Mammary epithelial cell (primary cell): ENCODE measurements at regions of chr3 and their contacts with region 1.

Region 1: DNA sequence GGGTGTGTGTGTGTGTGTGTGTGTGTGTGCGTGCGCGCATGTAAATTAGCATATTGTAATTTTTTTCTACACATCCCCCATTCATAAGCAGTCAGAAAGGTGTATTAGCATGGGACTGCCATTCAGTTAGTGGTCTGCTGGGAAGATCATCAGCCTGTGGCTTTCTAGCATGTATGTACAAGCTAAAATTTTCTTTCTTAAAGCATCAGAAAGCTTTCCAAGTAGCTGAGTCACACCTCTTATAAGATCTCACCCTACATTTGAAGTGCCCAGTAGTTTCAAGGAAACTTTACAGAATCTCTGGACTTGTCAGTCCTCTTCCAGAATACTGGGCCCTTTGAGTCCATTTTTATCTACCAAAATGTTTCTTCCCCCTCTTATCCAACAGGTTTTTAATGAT is 411.4 kb upstream of the TPRG1 start:
- DNase-seq: peak; percentile 91
- H3K4me3 ChIP-seq: no peak overlapping the region
- H3K27ac ChIP-seq: peak overlapping the region; percentile 67
- H3K4me1 ChIP-seq: peaks cover 22% of the 10 kb centered on the region
- H3K27me3 ChIP-seq: no peaks in the 10 kb centered on the region
- CTCF ChIP-seq: no peak

Region 2: GRCh38 chr3:188244395-188244861 is 516.0 kb before region 1 on chr3:
- CTCF ChIA-PET with region 1: no interaction called
- dilution Hi-C with region 1: no loop called
- in situ Hi-C with region 1: no loop called
- intact Hi-C with region 1: no loop called
- DNase-seq: peak; percentile 94
- H3K4me3 ChIP-seq: no peak overlapping the region
- H3K27ac ChIP-seq: peak overlapping the region; percentile 78
- H3K4me1 ChIP-seq: peaks cover 27% of the 10 kb centered on the region
- H3K27me3 ChIP-seq: no peaks in the 10 kb centered on the region
- CTCF ChIP-seq: no peak

Region 3: DNA sequence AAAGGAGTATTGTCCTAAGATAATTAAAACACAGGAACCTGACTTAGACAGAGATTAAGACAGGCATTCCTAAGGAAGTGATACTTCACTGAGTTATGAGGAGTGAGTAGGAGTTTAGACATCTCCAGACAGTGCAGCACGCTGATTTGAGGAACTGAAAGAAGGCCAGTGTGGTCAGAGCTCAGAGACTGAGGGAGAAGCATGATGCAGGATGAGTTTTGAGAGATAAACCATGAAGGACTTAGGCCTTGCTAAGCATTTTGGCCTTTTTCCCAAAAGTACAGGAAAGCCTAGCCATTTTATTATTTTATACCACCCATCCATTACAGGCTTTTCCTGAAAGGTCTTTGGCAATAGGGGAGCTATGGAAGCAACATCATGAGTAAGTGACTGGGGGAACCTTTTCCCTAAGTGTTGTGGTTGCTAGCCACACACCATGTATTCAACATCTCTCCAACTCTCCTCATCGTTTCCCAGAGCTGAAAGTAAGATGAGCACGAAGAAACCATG is 35.8 kb after region 1 on chr3:
- CTCF ChIA-PET with region 1: interaction called, 11 read pairs
- dilution Hi-C with region 1: no loop called
- in situ Hi-C with region 1: no loop called
- intact Hi-C with region 1: no loop called
- DNase-seq: peak; percentile 80
- H3K4me3 ChIP-seq: no peak overlapping the region
- H3K27ac ChIP-seq: no peak overlapping the region
- H3K4me1 ChIP-seq: peaks cover 6% of the 10 kb centered on the region
- H3K27me3 ChIP-seq: no peaks in the 10 kb centered on the region
- CTCF ChIP-seq: no peak

Region 4: GRCh38 chr3:188819939-188820338 is 59.5 kb after region 1 on chr3:
- CTCF ChIA-PET with region 1: no interaction called
- dilution Hi-C with region 1: no loop called
- in situ Hi-C with region 1: no loop called
- intact Hi-C with region 1: no loop called
- DNase-seq: no peak
- H3K4me3 ChIP-seq: no peak overlapping the region
- H3K27ac ChIP-seq: no peak overlapping the region
- H3K4me1 ChIP-seq: peaks cover 12% of the 10 kb centered on the region
- H3K27me3 ChIP-seq: no peaks in the 10 kb centered on the region
- CTCF ChIP-seq: no peak

Region 5: DNA sequence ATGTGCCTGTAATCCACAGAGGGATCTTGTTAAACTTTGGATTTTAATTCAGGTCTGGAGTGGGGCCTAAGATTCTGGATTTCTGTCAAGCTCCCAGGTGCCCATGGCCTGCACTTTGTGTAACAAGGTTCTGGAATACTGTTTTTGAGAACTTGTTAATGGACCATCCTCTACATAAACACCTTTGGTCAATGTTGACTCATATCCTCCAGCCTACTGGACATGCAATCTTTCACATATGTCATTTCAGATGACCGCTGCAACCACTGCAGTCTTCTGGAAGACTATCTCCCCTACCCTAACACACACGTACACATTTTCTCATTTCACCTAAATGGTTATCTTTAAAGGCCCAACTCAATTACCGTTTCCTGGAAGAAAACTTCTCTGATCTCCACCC is 109.2 kb after region 1 on chr3:
- CTCF ChIA-PET with region 1: no interaction called
- dilution Hi-C with region 1: no loop called
- in situ Hi-C with region 1: no loop called
- intact Hi-C with region 1: no loop called
- DNase-seq: no peak
- H3K4me3 ChIP-seq: no peak overlapping the region
- H3K27ac ChIP-seq: no peak overlapping the region
- H3K4me1 ChIP-seq: no peaks in the 10 kb centered on the region
- H3K27me3 ChIP-seq: no peaks in the 10 kb centered on the region
- CTCF ChIP-seq: no peak